OCI-LY7 (cell line): ENCODE measurements at regions of chr19 and their contacts with region 1.

Region 1: DNA sequence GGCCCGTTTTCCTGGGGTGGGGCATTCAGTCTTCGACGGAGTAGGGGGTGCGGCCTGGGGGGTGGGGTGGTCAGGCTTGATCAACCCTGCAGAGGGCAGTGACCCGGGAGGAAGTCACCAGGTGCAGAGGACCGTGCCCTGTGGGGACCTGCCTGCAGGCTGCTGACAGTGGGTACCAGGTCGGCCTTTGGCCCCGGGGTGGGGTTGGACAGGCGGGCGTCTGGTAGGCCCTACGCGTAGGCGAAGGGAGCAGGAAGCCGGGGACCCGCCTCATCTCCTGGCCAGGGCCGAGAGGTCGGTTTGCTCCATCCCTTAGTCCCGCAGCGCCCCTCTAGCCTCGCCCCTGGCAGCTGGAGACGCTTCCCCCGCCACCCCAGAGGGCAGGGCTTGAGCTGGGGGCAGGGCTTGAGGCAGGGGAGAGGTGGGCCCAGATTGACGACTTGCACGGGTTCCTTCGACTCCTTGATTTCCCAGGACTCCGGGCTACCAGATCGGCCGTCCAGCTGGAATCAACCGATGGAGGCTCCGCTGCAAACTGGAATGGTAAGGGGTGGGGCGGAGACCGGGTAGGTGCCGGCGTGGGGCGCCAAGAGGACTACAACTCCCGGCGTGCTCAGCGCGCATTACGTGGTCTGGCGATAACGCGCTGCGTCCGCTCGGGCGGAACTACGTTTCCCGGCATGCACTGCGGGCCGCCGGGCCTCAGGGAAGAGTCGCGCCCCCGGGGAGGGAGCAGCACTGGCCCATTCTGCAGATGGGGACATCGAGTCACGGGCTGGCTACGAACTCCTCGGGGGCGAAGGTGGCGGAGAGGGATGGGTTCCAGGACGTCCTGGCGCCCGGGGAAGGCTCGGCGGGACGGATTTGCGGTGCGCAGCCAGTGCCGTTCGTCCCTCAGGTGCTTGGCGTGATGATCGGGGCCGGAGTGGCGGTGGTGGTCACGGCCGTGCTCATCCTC is at the start of gene PNPLA6:
- DNase-seq: peak; percentile 95
- H3K4me3 ChIP-seq: peak within 1 kb of the TSS; percentile 93
- H3K27ac ChIP-seq: peak within 1 kb of the TSS; percentile 8
- H3K4me1 ChIP-seq: peaks cover 13% of the 10 kb centered on the region
- CTCF ChIP-seq: no peak
- total RNA-seq, gene PNPLA6: 50.6 and 54.3 TPM in 2 replicates

Region 2: DNA sequence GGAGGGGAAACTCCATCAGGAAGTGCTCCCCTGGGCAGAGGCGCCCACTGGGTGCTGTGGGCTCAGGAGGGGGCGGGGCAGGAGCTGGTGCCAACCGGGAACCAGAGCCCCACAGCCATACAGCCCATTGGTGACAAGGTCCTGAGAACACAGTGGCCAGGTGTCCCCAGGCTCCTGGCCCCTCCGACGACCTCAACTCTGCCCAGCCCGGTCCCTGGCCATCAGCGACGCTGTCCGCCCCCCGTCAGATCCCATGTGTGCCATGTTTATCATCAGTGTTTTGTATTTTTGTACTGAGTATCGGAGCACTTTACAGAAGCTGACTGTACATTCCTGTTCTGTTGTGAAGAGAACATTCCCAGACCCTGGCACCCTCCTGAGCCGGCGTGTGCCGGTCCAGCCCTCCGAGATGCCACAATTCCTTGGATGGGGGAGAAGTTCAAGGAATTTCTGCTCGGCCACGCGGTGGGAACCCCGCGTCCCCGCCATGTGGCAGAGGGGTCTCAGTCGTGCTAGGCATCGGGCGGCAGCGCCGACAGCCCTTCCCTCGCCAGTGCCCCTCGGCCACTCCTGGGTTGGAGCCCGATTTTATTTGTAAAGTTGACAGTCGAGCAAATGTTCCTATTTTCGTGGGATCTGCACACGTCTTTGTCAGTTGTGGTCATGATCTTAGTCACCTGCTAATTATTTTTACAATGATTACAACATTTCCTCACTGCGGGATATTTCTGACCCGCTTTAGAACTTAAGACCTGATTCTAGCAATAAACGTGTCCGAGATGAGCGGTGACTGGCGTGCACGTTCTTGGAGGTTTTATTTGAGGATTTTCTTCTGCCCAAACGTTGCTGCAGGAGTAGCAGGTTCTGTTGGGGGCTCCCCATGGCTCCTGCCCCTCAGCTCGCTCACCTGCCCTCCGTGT is 63.4 kb before region 1 on chr19:
- CTCF ChIA-PET with region 1: no interaction called
- POLR2A ChIA-PET with region 1: no interaction called
- intact Hi-C with region 1: loop called (anchors 2 kb)
- DNase-seq: no peak
- H3K4me3 ChIP-seq: no peak overlapping the region
- H3K27ac ChIP-seq: no peak overlapping the region
- H3K4me1 ChIP-seq: peaks cover 7% of the 10 kb centered on the region
- CTCF ChIP-seq: no peak

Region 3: GRCh38 chr19:7522072-7522922 is 13.0 kb before region 1 on chr19 and contains the start of gene MCOLN1:
- CTCF ChIA-PET with region 1: no interaction called
- POLR2A ChIA-PET with region 1: interaction called, 4 read pairs
- intact Hi-C with region 1: loop called (anchors 1 kb)
- DNase-seq: peak; percentile 99
- H3K4me3 ChIP-seq: peak within 1 kb of the TSS; percentile 78
- H3K27ac ChIP-seq: no peak within 1 kb of the TSS
- H3K4me1 ChIP-seq: peaks cover 14% of the 10 kb centered on the region
- CTCF ChIP-seq: no peak
- total RNA-seq, gene MCOLN1: 2.4 and 7.8 TPM in 2 replicates

Region 4: GRCh38 chr19:7565332-7565731 is 30.0 kb after region 1 on chr19:
- CTCF ChIA-PET with region 1: no interaction called
- POLR2A ChIA-PET with region 1: no interaction called
- intact Hi-C with region 1: no loop called
- DNase-seq: no peak
- H3K4me3 ChIP-seq: no peak overlapping the region
- H3K27ac ChIP-seq: no peak overlapping the region
- H3K4me1 ChIP-seq: no peaks in the 10 kb centered on the region
- CTCF ChIP-seq: no peak

Region 5: GRCh38 chr19:7590261-7590660 is 54.9 kb after region 1 on chr19:
- CTCF ChIA-PET with region 1: no interaction called
- POLR2A ChIA-PET with region 1: no interaction called
- intact Hi-C with region 1: no loop called
- DNase-seq: no peak
- H3K4me3 ChIP-seq: no peak overlapping the region
- H3K27ac ChIP-seq: no peak overlapping the region
- H3K4me1 ChIP-seq: no peaks in the 10 kb centered on the region
- CTCF ChIP-seq: no peak